Naive thymus-derived CD4-positive, alpha-beta T cell (primary cell): ENCODE measurements at regions of chr7 and their contacts with region 1.

Region 1: GRCh38 chr7:98168181-98168905 is 42.9 kb upstream of the BHLHA15 start:
- DNase-seq: peak; percentile 13 to 65 (median 49)
- ATAC-seq: peak; percentile 85
- H3K4me3 ChIP-seq: no peak overlapping the region
- H3K4me3 Mint-ChIP-seq: no peak overlapping the region
- H3K27ac ChIP-seq: no peak overlapping the region
- H3K27ac Mint-ChIP-seq: peak overlapping the region in 2 of 9 donors; percentile 26 to 38
- H3K4me1 ChIP-seq: no peaks in the 10 kb centered on the region
- H3K4me1 Mint-ChIP-seq: peaks cover 11 to 34% (median 26%) of the 10 kb centered on the region in 7 donors
- H3K27me3 ChIP-seq: no peaks in the 10 kb centered on the region
- H3K27me3 Mint-ChIP-seq: no peaks in the 10 kb centered on the region

Region 2: GRCh38 chr7:98021588-98022351 is 146.6 kb before region 1 on chr7:
- CTCF ChIA-PET with region 1: interaction called, 85 read pairs
- POLR2A ChIA-PET with region 1: no interaction called
- intact Hi-C with region 1: loop called (anchors 1 kb)
- DNase-seq: peak; percentile 44 to 84 (median 72)
- ATAC-seq: peak; percentile 88
- H3K4me3 ChIP-seq: no peak overlapping the region
- H3K4me3 Mint-ChIP-seq: no peak overlapping the region
- H3K27ac ChIP-seq: no peak overlapping the region
- H3K27ac Mint-ChIP-seq: peak overlapping the region in 1 of 9 donors; percentile 27
- H3K4me1 ChIP-seq: no peaks in the 10 kb centered on the region
- H3K4me1 Mint-ChIP-seq: peaks cover 0 to 5% (median 5%) of the 10 kb centered on the region in 7 donors
- H3K27me3 ChIP-seq: no peaks in the 10 kb centered on the region
- H3K27me3 Mint-ChIP-seq: peaks cover 0 to 10% (median 7%) of the 10 kb centered on the region in 5 donors

Region 3: DNA sequence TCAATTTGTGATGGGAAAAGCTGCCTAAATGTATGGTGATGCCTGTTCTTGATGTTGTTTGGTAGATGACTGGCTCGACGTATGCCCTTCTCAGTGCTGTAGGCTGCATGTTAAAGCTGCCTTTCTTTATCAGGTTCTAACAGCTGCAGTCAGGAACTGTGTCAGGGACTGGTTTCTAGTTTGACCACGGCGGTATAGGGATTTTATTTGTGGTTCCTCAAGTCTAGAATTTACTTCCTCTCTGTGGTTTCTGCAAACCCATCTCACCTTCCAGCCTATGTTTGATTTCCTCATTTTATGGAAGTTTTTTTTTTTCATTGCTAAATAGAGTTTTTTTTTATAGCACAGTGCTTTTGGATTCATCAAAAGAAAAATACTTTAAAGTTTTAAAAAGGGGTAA is 35.2 kb before region 1 on chr7:
- CTCF ChIA-PET with region 1: interaction called, 5 read pairs
- POLR2A ChIA-PET with region 1: no interaction called
- intact Hi-C with region 1: loop called in 1 of 2 experiments (anchors 2 kb)
- DNase-seq: peak in 6 of 9 donors; percentile 9 to 20 (median 16)
- ATAC-seq: peak; percentile 66
- H3K4me3 ChIP-seq: peak overlapping the region; percentile 11
- H3K4me3 Mint-ChIP-seq: peak overlapping the region; percentile 43 to 80 (median 60)
- H3K27ac ChIP-seq: no peak overlapping the region
- H3K27ac Mint-ChIP-seq: peak overlapping the region in 4 of 9 donors; percentile 2 to 15 (median 10)
- H3K4me1 ChIP-seq: peaks cover 30% of the 10 kb centered on the region in 2 donors
- H3K4me1 Mint-ChIP-seq: peaks cover 37 to 66% (median 57%) of the 10 kb centered on the region in 7 donors
- H3K27me3 ChIP-seq: no peaks in the 10 kb centered on the region
- H3K27me3 Mint-ChIP-seq: peaks cover 0 to 35% (median 0%) of the 10 kb centered on the region in 5 donors

Region 4: DNA sequence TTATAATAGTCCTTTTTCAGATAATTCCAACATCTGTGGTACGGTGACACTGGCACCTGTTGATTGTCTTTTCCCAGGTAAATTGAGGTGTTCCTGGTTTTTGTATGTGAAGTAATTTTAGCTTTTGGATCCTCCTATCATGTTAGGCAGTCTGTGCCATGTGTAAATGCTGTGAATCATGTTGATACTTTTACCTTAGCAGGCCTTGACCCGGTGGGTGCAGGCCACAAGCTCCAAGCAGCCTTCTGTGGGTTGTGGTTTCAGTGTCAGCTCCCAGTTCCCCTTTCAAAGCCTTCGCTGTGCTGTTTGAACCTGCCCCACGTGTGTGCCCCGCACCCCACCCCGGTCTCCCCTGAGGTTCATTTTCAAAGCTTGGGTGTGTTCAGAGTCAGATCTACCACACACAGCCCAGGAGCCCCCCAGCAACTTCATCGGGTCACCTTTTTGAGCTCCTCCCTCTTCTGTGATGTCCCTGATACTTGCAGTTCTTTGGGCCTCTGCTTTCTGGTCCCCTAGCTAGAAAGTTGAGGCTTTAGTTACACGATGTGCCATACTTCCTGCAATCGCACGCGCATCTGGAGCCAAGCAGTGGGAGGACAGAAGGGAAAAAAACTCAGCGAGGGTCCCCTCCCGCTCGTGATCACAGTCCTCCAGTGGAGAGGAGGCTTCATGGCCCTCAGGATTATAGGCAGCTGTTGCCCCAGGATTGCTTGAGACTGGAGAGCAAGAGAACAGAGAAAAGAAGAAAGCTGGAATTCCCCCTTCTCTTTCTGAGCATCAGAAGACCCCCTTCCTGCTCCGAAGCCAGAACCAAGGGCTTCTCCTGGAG is 34.2 kb after region 1 on chr7:
- CTCF ChIA-PET with region 1: interaction called, 4 read pairs
- POLR2A ChIA-PET with region 1: interaction called, 3 read pairs
- intact Hi-C with region 1: loop called in 1 of 2 experiments (anchors 5 kb)
- DNase-seq: peak in 8 of 9 donors; percentile 60 to 71 (median 64)
- ATAC-seq: peak; percentile 93
- H3K4me3 ChIP-seq: peak overlapping the region; percentile 24
- H3K4me3 Mint-ChIP-seq: peak overlapping the region; percentile 81 to 91 (median 86)
- H3K27ac ChIP-seq: peak overlapping the region; percentile 60
- H3K27ac Mint-ChIP-seq: peak overlapping the region; percentile 55 to 96 (median 80)
- H3K4me1 ChIP-seq: peaks cover 21 to 49% of the 10 kb centered on the region in 2 donors
- H3K4me1 Mint-ChIP-seq: peaks cover 35 to 76% (median 65%) of the 10 kb centered on the region in 7 donors
- H3K27me3 ChIP-seq: no peaks in the 10 kb centered on the region
- H3K27me3 Mint-ChIP-seq: no peaks in the 10 kb centered on the region